ENCODE measurements at regions of chr17 and their contacts with region 1.

Region 1: DNA sequence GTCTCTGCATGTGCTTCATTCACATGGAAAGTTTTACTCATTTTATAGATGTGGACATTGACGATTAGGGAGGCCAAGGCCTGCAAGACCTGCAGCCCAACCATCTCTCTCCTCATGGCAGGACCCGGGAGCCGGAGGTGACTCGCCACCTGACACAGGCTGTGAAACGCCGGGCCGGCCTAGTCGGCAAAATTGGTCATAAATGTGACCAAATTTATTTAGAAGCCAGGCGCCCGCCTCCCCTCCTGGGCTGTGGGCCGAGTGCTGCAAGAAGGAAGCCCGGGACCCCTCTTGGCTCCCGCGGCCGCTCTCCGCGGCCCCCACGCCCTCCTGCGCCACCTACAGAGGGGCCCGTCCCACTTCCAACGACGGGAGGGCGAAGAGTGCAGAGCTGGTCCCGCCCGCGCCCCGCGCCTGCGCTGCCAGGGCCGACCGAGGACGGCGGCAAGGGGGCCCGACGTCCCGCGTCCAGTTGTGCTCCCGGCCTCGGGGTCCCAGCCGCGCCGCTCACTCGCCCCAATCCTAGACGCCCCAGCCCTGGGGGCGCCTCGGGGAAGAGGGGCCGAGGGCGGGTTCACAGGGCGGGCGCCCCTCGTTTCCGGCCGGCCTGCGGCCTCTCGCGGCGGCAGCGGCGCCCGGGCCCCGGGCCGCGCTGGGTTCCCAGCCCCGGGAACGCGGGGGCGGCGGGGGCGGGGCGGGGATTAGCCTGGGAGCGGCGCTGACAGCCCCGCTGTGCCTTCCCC is 47.5 kb downstream of the WNT3 start:
- DNase-seq: peak; percentile 48
- ATAC-seq: peak; percentile 75 to 77

Region 2: DNA sequence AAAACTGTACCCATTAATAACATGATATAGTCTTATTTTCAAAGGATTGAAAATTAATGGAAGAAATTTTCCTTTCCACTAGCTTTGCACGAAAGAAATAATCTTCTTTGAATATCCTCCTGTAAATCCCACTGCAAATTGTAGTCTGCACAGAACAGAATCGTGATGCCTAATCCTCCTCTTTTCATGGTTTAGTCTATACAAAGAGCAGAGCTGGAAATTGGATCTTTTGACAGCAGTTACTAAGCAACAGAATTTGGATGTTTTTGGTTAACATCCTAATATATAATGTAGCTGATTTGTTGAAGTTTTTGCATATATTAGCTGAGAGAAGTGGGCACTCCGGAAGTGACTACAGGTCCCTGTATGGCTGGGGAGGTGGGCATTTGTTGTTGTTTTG is 51.1 kb before region 1 on chr17:
- intact Hi-C with region 1: loop called in 1 of 2 experiments (anchors 10 kb)
- DNase-seq: no peak
- ATAC-seq: no peak

Region 3: GRCh38 chr17:46841561-46842379 is 70.8 kb after region 1 on chr17:
- intact Hi-C with region 1: no loop called
- DNase-seq: peak; percentile 34
- ATAC-seq: peak; percentile 44 to 75